ENCODE measurements at regions of chr1 and their contacts with region 1.

Region 1: DNA sequence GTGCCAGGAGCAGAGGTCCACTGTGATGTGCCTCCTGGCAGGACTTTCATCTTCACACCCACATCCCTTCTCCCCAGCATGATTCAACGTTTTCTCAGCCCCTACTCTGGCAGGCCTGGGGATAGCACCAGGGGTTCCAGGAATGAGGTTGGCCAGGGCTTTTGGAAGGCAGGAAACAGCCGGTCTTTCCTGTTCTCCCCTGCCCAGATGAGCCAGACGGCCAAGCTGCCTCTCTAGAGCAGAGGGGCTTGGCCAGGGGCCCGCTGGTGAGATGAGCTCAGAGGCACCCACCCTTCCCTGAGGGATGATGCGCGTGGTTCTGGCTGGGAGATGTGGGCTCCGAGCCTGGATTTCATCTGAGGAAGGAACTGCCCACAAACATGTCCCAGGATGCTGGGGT is 4.3 kb upstream of the MFAP2 start:
- DNase-seq: no peak
- H3K4me3 ChIP-seq: no peak overlapping the region
- H3K27ac ChIP-seq: no peak overlapping the region
- H3K4me1 ChIP-seq: no peaks in the 10 kb centered on the region
- CTCF ChIP-seq: no peak

Region 2: GRCh38 chr1:17053685-17054410 is 69.1 kb after region 1 on chr1 and contains the start of gene SDHB:
- CTCF ChIA-PET with region 1: no interaction called
- POLR2A ChIA-PET with region 1: interaction called, 10 read pairs
- intact Hi-C with region 1: no loop called
- DNase-seq: peak; percentile 98
- H3K4me3 ChIP-seq: peak within 1 kb of the TSS; percentile 93
- H3K27ac ChIP-seq: peak within 1 kb of the TSS; percentile 27
- H3K4me1 ChIP-seq: peaks cover 20% of the 10 kb centered on the region
- CTCF ChIP-seq: no peak
- total RNA-seq, gene SDHB: 103 and 106 TPM in 2 replicates

Region 3: GRCh38 chr1:17287130-17287776 is 302.5 kb after region 1 on chr1:
- CTCF ChIA-PET with region 1: no interaction called
- POLR2A ChIA-PET with region 1: no interaction called
- intact Hi-C with region 1: no loop called
- DNase-seq: no peak
- H3K4me3 ChIP-seq: no peak overlapping the region
- H3K27ac ChIP-seq: no peak overlapping the region
- H3K4me1 ChIP-seq: no peaks in the 10 kb centered on the region
- CTCF ChIP-seq: no peak

Region 4: GRCh38 chr1:17465228-17465627 is 480.5 kb after region 1 on chr1:
- CTCF ChIA-PET with region 1: no interaction called
- POLR2A ChIA-PET with region 1: no interaction called
- intact Hi-C with region 1: no loop called
- DNase-seq: no peak
- H3K4me3 ChIP-seq: no peak overlapping the region
- H3K27ac ChIP-seq: no peak overlapping the region
- H3K4me1 ChIP-seq: no peaks in the 10 kb centered on the region
- CTCF ChIP-seq: no peak

Measured in OCI-LY7 (cell line).